Activated CD8-positive, alpha-beta T cell treated with anti-CD3 and anti-CD28 coated beads for 36 hours (primary cell): ENCODE measurements at regions of chr12 and their contacts with region 1.

Region 1: GRCh38 chr12:26884765-26885576 is 52.0 kb upstream of the ITPR2 start:
- DNase-seq: peak; percentile 90
- ATAC-seq: peak; percentile 97
- H3K4me3 Mint-ChIP-seq: peak overlapping the region; percentile 60
- H3K27ac Mint-ChIP-seq: no peak overlapping the region
- H3K4me1 Mint-ChIP-seq: peaks cover 9% of the 10 kb centered on the region
- H3K27me3 Mint-ChIP-seq: peaks cover 2% of the 10 kb centered on the region
- CTCF ChIP-seq: peak; percentile 96

Region 2: GRCh38 chr12:26845057-26845666 is 39.8 kb before region 1 on chr12:
- CTCF ChIA-PET with region 1: interaction called, 105 read pairs
- POLR2A ChIA-PET with region 1: no interaction called
- intact Hi-C with region 1: no loop called
- DNase-seq: peak; percentile 26
- ATAC-seq: no peak
- H3K4me3 Mint-ChIP-seq: no peak overlapping the region
- H3K27ac Mint-ChIP-seq: no peak overlapping the region
- H3K4me1 Mint-ChIP-seq: peaks cover 11% of the 10 kb centered on the region
- H3K27me3 Mint-ChIP-seq: peaks cover 7% of the 10 kb centered on the region
- CTCF ChIP-seq: peak; percentile 64

Region 3: GRCh38 chr12:26863502-26863901 is 21.5 kb before region 1 on chr12:
- CTCF ChIA-PET with region 1: interaction called, 105 read pairs
- POLR2A ChIA-PET with region 1: no interaction called
- intact Hi-C with region 1: no loop called
- DNase-seq: peak; percentile 30
- ATAC-seq: no peak
- H3K4me3 Mint-ChIP-seq: no peak overlapping the region
- H3K27ac Mint-ChIP-seq: no peak overlapping the region
- H3K4me1 Mint-ChIP-seq: peaks cover 13% of the 10 kb centered on the region
- H3K27me3 Mint-ChIP-seq: no peaks in the 10 kb centered on the region
- CTCF ChIP-seq: peak; percentile 26

Region 4: DNA sequence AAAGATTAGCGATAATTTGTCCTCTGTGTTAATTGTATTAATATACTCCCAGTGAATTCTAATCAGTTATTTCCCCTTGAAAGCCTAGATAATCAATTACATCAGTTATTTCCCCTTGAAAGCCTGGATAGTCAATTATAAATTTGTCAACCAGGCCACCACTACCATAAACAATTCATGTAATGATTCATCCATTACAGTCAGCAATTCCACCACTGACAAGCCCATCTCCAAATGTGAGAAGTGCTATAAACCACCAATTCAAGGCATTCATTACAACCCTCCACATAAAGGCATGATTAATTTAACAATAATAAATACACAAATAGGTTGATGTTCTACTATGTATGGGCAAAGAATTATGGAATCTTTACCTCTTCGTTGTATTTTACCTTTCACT is 11.9 kb after region 1 on chr12:
- CTCF ChIA-PET with region 1: interaction called, 29 read pairs
- POLR2A ChIA-PET with region 1: interaction called, 3 read pairs
- intact Hi-C with region 1: no loop called
- DNase-seq: no peak
- ATAC-seq: no peak
- H3K4me3 Mint-ChIP-seq: no peak overlapping the region
- H3K27ac Mint-ChIP-seq: no peak overlapping the region
- H3K4me1 Mint-ChIP-seq: peaks cover 6% of the 10 kb centered on the region
- H3K27me3 Mint-ChIP-seq: no peaks in the 10 kb centered on the region
- CTCF ChIP-seq: no peak